Endothelial cell of umbilical vein (primary cell): ENCODE measurements at regions of chr5 and their contacts with region 1.

Region 1: DNA sequence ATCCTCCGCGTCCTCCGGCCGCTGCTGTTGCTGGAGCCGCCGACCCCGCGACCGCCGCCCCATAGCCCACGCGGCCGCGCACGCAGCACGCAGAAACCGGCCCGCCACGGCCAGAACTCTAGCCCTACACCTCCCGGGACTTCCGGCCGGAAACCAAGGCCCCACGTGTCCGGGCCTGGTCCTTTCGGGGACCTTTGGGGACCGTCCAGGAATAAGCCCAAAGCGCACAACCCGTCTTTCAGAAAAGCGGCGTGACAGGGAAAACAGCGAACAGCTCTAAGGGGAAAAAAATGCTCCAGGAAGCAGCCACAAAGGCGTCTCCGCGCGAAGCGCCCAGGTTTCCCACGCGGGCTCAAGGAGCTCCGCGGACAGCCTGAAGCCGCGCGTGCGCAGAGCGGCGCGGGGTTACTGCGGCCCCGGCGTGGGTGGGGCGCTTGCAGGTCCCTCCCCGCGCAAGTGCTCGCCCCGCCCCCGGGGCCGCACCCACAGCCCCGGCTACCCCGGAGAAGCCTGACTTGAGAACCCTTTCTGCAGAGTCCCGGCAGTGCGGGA is at the starts of genes NSUN2 and SRD5A1:
- DNase-seq: peak; percentile 92
- H3K4me3 ChIP-seq: peak within 1 kb of the TSS; percentile 75 to 90 (median 79)
- H3K27ac ChIP-seq: peak within 1 kb of the TSS; percentile 99
- H3K4me1 ChIP-seq: peaks cover 19% of the 10 kb centered on the region
- H3K27me3 ChIP-seq: no peaks in the 10 kb centered on the region
- CTCF ChIP-seq: no peak
- POLR2A ChIP-seq: peak; percentile 67
- total RNA-seq, gene NSUN2: 73.0 and 85.4 TPM in 2 replicates
- total RNA-seq, gene SRD5A1: 12.4 and 14.8 TPM in 2 replicates

Region 2: DNA sequence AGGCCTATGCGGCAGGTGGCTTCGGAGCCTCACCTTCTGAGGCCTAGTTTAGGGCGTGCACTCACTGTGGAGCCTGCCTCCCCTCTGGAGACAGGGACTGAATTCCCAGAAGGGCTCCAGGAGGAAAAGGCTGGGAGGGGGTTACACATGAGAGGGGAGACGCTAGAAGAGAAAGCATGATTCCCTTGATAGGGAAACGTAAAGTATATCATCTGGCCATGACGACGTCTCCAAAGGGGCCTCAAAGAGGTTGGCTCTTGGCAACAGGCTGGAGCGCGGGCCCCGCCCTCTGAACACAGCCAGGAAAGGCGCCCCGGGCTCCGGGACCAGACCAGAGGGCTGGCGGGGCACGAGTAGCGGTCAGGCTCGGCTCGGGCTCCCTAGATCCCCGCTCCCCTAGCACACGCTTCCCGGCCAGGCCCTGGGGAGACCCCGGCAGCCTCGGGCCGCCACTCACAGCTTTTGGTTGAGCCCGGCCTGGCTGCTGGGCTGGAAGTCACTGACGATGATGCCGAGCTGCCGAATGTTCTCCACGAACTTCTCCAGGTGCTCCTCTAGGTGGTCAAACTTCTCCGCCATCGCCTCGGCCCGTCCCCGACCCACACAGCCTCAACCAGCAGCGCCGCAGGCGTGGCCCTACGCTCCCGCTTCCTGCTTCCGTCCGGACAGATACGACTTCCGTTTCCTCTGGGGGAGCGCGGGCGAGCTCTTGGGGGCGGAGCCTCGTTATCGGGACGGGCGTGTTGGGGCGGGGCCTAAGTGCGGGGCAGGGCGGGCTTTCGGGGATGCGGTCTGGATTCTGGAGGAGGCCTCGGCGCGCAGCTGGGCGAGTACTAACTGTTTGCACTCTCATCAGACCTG is 254.9 kb before region 1 on chr5 and contains the start of gene MED10:
- CTCF ChIA-PET with region 1: no interaction called
- POLR2A ChIA-PET with region 1: no interaction called
- dilution Hi-C with region 1: no loop called
- intact Hi-C with region 1: loop called (anchors 2 kb)
- DNase-seq: peak; percentile 88
- H3K4me3 ChIP-seq: peak within 1 kb of the TSS; percentile 51 to 76 (median 71)
- H3K27ac ChIP-seq: peak within 1 kb of the TSS; percentile 86
- H3K4me1 ChIP-seq: peaks cover 28% of the 10 kb centered on the region
- H3K27me3 ChIP-seq: no peaks in the 10 kb centered on the region
- CTCF ChIP-seq: no peak
- POLR2A ChIP-seq: peak; percentile 87
- total RNA-seq, gene MED10: 55.6 and 57.8 TPM in 2 replicates

Region 3: GRCh38 chr5:6419340-6419852 is 213.6 kb before region 1 on chr5:
- CTCF ChIA-PET with region 1: no interaction called
- POLR2A ChIA-PET with region 1: no interaction called
- dilution Hi-C with region 1: no loop called
- intact Hi-C with region 1: loop called (anchors 2 kb)
- DNase-seq: peak; percentile 89
- H3K4me3 ChIP-seq: no peak overlapping the region
- H3K27ac ChIP-seq: peak overlapping the region; percentile 74
- H3K4me1 ChIP-seq: peaks cover 45% of the 10 kb centered on the region
- H3K27me3 ChIP-seq: no peaks in the 10 kb centered on the region
- CTCF ChIP-seq: no peak
- POLR2A ChIP-seq: no peak

Region 4: DNA sequence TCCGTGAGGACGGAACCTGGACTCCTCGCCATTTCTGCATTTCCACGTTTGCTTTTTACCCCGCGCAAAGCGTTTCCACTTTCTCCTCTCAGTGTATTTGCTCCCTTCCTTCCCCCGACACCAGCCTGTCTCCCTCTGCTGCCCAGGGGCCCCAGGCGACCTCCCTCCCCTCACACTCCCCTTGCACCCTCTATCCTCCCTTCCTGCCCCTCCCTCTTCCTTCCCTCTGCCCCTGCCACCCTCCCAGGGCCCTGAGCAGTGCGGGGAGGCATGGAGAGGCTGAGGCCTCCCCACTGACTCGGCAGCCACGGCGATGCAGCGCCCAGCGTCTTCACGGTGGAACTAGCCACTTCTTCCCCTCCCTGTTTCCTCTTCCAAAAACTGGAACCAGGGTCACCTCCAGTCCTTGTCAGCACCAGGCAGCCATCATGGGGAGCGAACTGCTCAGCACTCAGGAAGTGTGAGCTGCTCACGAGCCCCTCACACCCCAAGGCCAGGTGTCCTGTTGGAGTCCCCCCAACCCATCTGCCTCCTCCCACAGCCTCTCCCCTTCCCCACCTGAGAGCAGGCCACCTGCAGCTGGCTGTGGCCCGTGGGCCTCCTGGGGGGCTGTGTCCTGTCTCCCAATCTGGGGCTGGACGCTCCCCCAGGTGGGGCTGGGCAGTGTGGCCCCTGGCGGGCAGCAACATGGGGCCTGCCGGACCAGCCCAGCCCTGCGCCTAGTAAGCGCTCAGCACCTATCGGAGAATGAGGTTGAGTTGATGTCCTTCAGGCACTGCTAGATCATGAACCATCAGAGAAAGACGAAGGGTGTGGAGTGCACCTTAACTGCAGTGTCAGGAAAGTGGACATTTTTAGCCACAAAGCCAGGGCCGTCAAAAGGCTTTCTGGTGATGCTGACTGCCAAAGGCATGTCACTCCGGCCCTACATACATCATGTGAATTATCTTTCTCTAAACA is 166.9 kb before region 1 on chr5:
- CTCF ChIA-PET with region 1: no interaction called
- POLR2A ChIA-PET with region 1: no interaction called
- dilution Hi-C with region 1: no loop called
- intact Hi-C with region 1: no loop called
- DNase-seq: no peak
- H3K4me3 ChIP-seq: no peak overlapping the region
- H3K27ac ChIP-seq: no peak overlapping the region
- H3K4me1 ChIP-seq: no peaks in the 10 kb centered on the region
- H3K27me3 ChIP-seq: no peaks in the 10 kb centered on the region
- CTCF ChIP-seq: no peak
- POLR2A ChIP-seq: no peak

Region 5: DNA sequence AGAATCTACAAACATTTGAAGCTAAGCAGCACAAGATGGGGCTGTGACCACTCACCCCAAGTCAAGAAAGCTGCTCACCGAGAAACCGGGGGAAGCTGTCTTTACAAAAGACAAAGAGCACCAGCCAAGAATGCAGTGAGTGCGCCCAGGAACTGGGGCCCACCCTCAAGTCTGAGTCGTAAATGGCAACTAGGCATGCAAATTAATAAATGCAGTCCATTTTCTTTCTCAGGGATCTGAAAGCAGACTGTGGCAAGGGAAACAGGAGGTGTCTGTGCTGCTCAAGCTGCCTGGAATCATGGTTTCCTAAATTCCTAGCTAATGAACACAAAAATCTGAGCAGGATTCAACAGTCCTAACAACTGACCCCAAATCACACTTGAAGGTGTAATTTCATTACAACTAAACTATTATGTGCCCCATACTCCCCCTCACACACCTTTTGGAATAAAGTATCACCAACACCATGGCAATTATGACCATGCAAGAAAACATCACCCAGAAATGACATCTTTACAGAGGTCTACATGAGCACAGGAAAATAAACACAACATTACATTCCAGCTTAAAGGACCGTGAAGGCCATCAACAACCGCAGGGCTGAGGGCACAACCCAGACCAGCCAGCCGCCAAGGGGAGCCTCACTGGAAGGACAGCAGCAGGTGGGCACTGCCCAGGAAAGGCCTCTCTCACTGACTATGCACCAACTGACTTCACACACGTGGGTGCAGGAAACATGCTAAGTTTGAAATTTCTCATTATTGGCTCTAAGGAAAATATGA is 17.8 kb before region 1 on chr5:
- CTCF ChIA-PET with region 1: interaction called, 12 read pairs
- POLR2A ChIA-PET with region 1: interaction called, 3 read pairs
- dilution Hi-C with region 1: no loop called
- intact Hi-C with region 1: no loop called
- DNase-seq: no peak
- H3K4me3 ChIP-seq: no peak overlapping the region
- H3K27ac ChIP-seq: no peak overlapping the region
- H3K4me1 ChIP-seq: no peaks in the 10 kb centered on the region
- H3K27me3 ChIP-seq: no peaks in the 10 kb centered on the region
- CTCF ChIP-seq: no peak
- POLR2A ChIP-seq: no peak

Region 6: DNA sequence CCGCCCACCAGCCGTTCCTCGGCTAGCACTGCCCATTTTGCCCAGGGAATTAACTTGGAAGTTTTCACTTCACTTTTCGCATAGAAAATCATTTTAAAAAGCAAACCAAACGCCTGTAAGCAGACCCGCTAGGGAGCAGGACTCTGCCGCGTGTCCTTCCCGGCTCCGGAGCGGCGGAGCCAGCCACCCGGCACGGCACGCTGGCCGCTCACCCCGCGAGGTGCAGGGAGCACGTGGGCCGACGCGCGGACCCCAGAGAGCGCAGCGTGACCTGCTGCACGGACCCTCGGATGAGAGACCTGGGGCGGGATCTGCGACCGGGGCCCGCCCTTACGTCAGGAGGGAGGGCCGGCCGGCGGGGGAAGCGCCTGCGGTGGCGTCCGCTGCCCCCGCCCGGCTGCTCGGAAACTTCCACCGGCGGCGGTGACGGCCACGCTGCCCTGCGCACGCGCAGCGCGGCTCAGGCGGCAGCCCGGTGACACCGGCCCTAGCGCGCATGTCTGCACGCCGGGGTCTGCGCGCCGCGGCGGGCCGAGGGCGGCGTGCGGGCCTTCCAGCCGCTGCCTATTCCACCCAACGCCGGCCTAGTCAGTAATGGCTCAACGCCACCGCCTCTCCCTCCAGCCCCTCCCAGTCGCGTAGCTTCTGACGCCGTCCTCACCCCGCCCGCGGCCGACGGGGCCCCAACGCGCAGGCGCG is 79.7 kb after region 1 on chr5:
- CTCF ChIA-PET with region 1: interaction called, 5 read pairs
- POLR2A ChIA-PET with region 1: interaction called, 7 read pairs
- dilution Hi-C with region 1: no loop called
- intact Hi-C with region 1: loop called (anchors 1 kb)
- DNase-seq: peak; percentile 98
- H3K4me3 ChIP-seq: peak overlapping the region; percentile 44 to 74 (median 65)
- H3K27ac ChIP-seq: peak overlapping the region; percentile 65
- H3K4me1 ChIP-seq: peaks cover 25% of the 10 kb centered on the region
- H3K27me3 ChIP-seq: no peaks in the 10 kb centered on the region
- CTCF ChIP-seq: no peak
- POLR2A ChIP-seq: peak; percentile 83

Region 7: DNA sequence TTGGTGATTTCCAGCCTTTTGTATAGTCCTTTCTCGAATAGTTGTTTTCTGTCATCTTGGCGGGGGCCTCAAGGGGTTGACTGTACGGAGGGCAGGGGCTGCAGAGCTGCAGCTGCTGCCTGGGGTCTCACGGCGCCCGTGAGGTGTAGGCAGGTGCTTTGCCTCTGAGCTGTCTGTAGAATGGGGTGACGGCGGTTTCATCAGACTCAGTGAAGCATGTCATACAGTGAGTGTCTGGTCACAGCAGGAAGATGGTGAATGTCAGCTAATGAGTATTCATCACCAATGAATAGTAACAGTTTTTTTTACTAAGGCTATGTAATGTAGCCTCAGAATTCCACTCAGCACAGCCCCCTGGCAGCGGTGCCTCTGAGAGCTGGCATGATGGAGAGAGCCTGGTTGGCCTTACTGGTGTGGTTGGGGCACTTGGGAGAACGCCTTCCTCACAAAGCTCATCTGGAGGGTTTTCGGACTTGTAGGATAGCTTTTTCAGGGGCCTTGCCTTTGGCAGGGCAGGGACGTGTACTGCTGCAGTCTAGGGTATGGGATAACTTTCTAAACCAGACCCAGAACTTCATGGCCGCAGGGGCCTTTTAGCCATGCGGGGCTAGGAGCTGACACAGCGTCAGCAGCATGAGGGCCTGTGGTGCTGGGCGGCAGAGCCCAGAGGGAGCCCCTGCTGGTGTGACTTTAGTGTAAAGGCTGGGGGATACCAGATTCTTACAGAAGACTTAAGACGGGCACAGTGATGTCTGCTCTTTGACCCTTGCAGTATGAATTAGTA is 95.2 kb after region 1 on chr5:
- CTCF ChIA-PET with region 1: interaction called, 9 read pairs
- POLR2A ChIA-PET with region 1: interaction called, 3 read pairs
- dilution Hi-C with region 1: loop called (anchors 25 kb)
- intact Hi-C with region 1: loop called (anchors 1 kb)
- DNase-seq: no peak
- H3K4me3 ChIP-seq: no peak overlapping the region
- H3K27ac ChIP-seq: no peak overlapping the region
- H3K4me1 ChIP-seq: peaks cover 28% of the 10 kb centered on the region
- H3K27me3 ChIP-seq: no peaks in the 10 kb centered on the region
- CTCF ChIP-seq: no peak
- POLR2A ChIP-seq: no peak

Region 8: DNA sequence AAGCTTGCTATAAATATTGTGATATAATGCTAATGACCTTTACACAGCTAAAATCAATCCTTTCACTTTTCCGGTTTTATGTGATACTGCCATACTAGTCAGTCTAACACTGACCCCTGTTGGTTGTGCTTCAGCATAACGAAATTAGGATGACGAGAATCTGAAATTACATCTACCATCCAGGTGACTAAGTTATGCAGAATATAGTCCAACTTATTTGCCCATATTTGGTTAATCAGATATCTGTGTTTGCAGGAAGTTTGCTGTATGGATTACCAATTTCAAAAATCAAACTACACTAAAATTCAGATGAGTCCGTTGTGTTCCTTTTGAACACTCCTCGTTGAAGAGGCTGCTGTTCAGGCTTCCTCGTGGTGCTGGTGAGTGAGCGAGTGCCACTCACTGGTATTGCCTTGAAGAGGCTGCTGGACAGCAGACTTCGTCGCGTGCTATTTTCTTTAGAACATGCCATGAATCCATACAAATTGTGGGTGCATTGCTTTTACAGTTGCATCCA is 112.8 kb after region 1 on chr5:
- CTCF ChIA-PET with region 1: interaction called, 59 read pairs
- POLR2A ChIA-PET with region 1: interaction called, 3 read pairs
- dilution Hi-C with region 1: loop called (anchors 25 kb)
- intact Hi-C with region 1: loop called (anchors 1 kb)
- DNase-seq: peak; percentile 70
- H3K4me3 ChIP-seq: no peak overlapping the region
- H3K27ac ChIP-seq: no peak overlapping the region
- H3K4me1 ChIP-seq: no peaks in the 10 kb centered on the region
- H3K27me3 ChIP-seq: no peaks in the 10 kb centered on the region
- CTCF ChIP-seq: peak; percentile 61 to 65
- POLR2A ChIP-seq: no peak